ENCODE measurements at regions of chr1 and their contacts with region 1.

Region 1: GRCh38 chr1:33080885-33081553 is at the start of gene AZIN2:
- DNase-seq: peak; percentile 93
- H3K4me3 Mint-ChIP-seq: peak within 1 kb of the TSS; percentile 84
- H3K27ac Mint-ChIP-seq: no peak within 1 kb of the TSS
- H3K4me1 Mint-ChIP-seq: peaks cover 17% of the 10 kb centered on the region
- H3K27me3 Mint-ChIP-seq: peaks cover 36% of the 10 kb centered on the region
- total RNA-seq, gene AZIN2: 1.1 and 1.4 TPM in 2 replicates

Region 2: GRCh38 chr1:32716312-32717148 is 364.5 kb before region 1 on chr1:
- intact Hi-C with region 1: loop called (anchors 10 kb)
- DNase-seq: peak; percentile 60
- H3K4me3 Mint-ChIP-seq: no peak overlapping the region
- H3K27ac Mint-ChIP-seq: no peak overlapping the region
- H3K4me1 Mint-ChIP-seq: peaks cover 10% of the 10 kb centered on the region
- H3K27me3 Mint-ChIP-seq: peaks cover 12% of the 10 kb centered on the region

Region 3: DNA sequence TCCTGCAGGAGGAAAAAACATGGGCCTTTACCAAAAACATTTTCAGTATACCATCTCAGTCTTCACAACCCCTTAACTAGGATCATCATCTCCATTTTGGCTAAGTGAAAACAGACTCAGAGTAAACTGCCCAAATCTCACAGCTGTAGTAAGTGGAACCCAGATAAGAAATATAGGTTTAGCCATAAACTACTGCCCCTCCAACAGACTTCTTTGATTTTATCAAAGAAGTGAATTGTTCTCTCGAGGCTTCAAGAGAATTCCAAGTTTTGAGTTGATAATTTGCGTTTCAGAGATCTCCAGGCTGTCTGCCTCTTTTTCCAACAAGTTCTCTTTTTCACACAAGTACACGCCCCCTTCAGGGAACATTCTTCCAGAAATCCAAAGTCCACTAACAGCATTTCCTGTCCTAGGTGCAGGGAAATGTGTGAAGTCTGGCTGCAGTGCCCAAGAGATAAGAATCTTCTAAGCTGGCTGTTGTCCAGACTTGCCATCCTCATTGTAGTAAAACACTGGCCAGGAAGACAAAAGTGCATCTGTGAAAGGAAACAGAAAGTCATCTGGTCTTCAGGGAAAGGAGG is 147.2 kb before region 1 on chr1:
- intact Hi-C with region 1: loop called (anchors 1 kb)
- DNase-seq: no peak
- H3K4me3 Mint-ChIP-seq: no peak overlapping the region
- H3K27ac Mint-ChIP-seq: no peak overlapping the region
- H3K4me1 Mint-ChIP-seq: peaks cover 49% of the 10 kb centered on the region
- H3K27me3 Mint-ChIP-seq: no peaks in the 10 kb centered on the region

Region 4: DNA sequence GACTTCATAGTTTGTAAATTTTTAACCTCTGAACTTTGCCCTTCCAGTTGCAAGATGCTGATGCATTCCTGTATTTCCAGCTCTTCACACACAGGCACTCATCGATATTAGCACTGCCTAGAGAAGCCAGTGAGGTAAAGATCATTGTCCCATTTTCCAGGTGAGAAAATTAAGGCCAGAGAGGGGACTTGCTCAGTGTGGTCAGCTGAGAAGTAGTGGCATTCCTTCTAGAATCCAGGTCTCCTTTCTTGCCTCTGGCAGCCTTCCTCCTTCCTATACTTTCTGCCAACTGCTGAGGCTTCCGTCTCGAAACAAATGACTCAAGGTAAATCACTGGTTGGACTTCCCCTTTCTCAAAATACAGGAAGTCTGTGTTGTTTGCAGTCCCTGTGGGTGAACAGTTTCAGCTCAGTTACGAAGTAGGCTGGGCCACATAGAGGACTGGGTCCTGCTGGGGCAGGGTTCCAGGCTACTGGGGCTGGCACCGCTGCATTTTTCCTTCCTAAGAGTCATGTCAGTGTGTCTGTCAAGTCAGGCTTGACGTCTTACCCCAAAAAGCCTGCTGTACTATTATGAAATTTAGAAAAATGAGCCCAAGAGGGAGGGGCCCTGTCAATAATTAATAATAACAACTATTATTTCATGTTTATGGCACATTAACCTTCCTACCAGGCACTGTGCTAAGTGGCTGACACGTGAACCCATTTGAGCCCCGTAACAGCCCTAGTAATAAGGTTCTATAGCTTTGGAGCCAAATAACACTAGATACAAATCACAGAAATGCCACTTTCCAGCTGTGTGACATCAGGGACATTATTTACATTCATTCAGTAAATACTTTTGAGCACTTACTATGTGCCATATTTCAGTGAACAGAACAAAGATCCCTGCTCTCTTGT is 99.8 kb before region 1 on chr1:
- intact Hi-C with region 1: loop called (anchors 1 kb)
- DNase-seq: peak; percentile 65
- H3K4me3 Mint-ChIP-seq: peak overlapping the region; percentile 60
- H3K27ac Mint-ChIP-seq: peak overlapping the region; percentile 85
- H3K4me1 Mint-ChIP-seq: peaks cover 81% of the 10 kb centered on the region
- H3K27me3 Mint-ChIP-seq: no peaks in the 10 kb centered on the region

Region 5: DNA sequence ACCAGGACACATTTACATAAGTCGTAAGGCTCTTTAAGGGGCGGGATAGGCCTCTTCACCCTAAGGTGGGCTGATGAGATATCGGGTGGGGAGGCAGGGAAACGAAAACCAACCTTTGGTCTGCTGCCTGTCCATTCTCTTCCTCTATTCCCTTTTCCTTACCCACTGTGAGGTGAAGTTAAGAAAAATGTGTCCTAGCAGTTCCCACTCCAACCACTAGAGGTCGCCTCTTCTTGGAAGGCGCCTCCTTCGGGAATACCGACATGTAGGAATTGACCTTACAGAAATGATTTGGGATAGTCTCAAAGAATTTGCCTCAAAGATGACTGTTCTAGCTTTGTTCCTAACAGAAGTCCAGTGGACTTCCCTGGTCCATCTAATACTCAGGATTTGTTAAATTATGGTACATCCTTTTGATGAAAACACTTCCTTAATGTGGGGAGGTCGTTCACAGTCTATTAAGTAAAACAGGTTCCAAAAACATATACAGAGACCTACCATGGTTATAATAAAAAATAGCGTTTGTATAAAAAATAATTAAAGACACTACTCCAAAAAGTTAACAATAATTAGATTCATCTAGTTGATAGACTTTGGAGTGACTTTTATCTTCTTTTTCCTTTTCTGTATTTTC is 14.1 kb after region 1 on chr1:
- intact Hi-C with region 1: loop called (anchors 1 kb)
- DNase-seq: no peak
- H3K4me3 Mint-ChIP-seq: no peak overlapping the region
- H3K27ac Mint-ChIP-seq: no peak overlapping the region
- H3K4me1 Mint-ChIP-seq: peaks cover 57% of the 10 kb centered on the region
- H3K27me3 Mint-ChIP-seq: no peaks in the 10 kb centered on the region

Region 6: DNA sequence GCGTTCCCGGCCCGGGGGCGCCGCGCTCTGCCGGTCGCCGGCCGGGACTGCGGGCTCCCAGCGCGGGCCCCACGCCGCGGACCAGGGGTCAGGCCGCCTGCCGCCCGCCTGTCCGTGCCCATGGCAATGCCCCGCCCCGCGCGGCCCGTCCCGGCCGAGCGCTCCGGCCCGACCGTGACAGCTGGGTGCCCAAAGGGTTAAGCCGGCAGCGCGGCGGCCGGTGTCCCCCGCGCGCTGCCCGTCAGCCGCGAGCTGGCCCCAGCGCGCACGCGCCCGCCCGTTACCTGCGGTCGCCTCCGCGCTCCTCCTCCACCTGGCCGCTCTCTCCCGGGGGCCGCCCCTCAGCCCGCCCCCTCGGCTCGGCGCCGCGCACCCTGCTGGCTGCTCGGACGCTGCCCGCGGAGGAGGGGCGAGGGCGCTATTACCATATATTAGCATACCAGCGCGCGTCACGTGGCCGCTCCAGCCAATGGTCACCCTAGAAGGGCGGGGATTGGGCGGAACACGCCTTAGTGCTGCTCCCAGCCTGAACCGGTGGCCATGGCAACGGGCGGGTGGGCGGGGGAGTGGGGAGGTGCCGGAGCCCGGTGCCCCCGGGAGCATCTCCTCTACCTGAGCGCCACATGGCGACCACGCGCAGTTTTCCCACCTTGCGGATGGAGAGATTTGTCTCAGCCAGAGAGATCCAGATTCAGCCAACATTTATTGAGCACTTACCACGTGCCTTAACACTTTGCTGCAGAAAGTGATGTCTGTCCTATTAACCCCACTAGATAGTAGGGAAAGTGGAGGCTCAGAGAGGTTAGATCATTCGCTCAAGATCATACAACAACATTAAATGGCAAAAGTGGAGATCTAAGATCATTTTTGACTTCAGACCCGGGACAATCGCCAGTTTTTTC is 349.9 kb after region 1 on chr1 and contains the start of gene PHC2:
- intact Hi-C with region 1: loop called (anchors 1 kb)
- DNase-seq: peak; percentile 82
- H3K4me3 Mint-ChIP-seq: peak within 1 kb of the TSS; percentile 57
- H3K27ac Mint-ChIP-seq: no peak within 1 kb of the TSS
- H3K4me1 Mint-ChIP-seq: peaks cover 4% of the 10 kb centered on the region
- H3K27me3 Mint-ChIP-seq: peaks cover 26% of the 10 kb centered on the region
- total RNA-seq, gene PHC2: 36.7 and 40.1 TPM in 2 replicates

Region 7: DNA sequence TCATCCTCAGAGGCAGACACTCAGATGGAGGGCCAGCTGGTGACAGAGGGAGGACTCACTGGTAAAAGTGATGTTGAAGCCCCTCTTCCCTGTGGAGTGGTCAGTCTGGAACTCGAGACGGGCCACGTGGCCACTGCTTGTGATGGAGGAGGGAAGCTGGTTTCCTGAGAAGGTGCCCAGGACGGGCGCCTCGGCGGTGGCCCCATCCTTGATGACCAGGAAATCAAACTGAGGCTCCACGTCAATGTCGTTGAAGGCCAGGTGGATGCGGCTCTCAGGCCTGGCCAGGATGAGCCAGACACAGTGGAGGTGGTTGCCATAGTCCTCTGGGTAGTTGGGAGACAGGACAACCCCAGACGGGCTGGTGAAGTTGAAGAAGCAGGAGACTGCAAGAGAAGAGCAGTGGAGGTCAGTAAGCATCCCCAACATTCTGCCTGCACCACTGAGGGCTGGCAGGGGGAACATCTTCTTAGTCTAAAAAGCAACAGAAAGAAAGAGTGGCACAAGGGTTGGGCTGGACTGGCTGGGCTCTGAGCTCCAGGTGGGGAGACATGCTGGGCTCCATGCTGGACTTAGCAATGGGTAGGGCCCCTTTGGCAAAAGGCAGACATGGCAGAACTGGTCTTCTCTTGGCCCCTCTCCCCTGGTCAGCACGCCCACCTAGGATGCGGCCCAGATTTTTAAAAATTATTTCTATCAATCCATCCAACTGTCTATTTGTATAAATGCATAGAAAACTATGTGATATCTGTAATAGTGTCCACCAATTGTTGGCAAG is 662.4 kb after region 1 on chr1:
- intact Hi-C with region 1: no loop called
- DNase-seq: no peak
- H3K4me3 Mint-ChIP-seq: no peak overlapping the region
- H3K27ac Mint-ChIP-seq: no peak overlapping the region
- H3K4me1 Mint-ChIP-seq: no peaks in the 10 kb centered on the region
- H3K27me3 Mint-ChIP-seq: peaks cover 2% of the 10 kb centered on the region